ENCODE measurements at regions of chr5 and their contacts with region 1.

Region 1: GRCh38 chr5:80083101-80083890 is 48.1 kb downstream of the THBS4 start:
- DNase-seq: peak; percentile 29
- H3K4me3 Mint-ChIP-seq: peak overlapping the region; percentile 61
- H3K27ac Mint-ChIP-seq: peak overlapping the region; percentile 76
- H3K4me1 Mint-ChIP-seq: peaks cover 13% of the 10 kb centered on the region
- H3K27me3 Mint-ChIP-seq: peaks cover 3% of the 10 kb centered on the region

Region 2: DNA sequence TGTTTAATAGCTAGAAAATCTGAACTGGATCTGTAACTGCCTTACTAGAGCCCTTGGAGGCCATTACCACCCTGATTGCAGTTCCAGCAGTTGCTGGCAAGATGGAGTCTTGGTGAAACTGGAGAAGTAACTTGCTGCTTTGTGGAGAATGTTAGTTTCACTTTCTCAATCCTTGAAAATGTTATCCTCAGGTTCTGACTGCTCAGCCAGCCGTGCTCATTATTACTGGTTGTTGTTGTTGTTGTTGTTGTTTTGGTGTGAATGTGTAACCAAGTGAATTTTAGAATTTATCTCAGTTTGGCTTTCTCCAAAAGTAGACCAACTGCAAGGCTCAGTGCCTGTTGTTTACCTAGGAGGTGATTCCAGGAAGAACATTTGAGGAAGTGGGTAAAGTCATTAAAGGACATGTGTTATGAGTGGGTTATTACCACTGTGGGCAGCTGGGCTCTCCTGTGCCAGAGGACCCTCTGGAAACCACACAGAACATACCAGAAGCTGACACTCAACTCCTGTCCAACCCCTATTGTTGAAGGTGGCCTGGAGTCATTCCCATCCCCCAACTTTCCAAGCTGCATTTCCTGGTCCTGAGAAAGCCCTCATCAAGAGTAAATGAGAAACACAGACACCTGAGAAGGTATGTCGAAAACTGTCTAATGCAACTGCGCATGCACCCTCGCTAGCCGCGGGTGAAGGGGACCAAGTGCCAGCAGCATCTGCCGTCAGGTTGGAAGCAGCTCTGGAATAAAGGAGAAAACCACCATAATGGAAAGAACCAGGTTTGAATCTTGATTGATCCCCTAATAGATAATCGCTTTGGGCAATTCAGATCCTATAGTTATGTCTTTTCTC is 282.1 kb before region 1 on chr5:
- CTCF ChIA-PET with region 1: no interaction called
- DNase-seq: peak; percentile 27
- H3K4me3 Mint-ChIP-seq: no peak overlapping the region
- H3K27ac Mint-ChIP-seq: peak overlapping the region; percentile 64
- H3K4me1 Mint-ChIP-seq: peaks cover 24% of the 10 kb centered on the region
- H3K27me3 Mint-ChIP-seq: peaks cover 7% of the 10 kb centered on the region

Region 3: DNA sequence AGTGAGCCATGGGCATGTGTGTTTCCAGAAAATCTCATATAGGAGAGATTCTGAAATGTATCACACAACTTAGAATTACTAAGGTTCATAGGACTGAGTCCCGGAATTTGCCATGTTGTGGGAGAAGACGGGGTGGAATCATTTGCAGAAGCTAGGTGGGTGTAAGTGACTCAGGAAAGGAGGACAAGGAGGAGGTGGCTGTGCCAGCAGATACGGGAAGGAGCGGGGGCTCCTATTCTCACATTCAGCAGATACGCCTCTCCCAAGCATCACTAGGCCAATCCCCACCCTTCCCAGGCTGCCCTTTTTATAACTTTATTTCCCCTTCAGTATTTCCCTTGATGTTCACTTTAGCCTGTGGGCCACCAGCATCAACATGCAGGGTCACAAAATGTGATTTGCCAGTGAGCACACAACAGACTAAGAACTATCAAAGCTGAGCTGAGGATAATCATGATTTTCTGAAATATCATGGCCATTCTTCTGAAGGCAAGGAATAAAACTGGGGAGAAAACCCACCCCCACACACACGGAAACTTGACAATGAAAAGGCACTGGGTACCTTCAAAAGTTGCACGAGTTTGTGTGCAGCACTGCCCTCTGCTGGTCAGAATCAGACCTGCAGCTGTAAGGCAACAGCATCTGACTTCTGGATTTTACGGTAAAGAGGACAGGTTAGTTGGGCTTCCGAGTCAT is 225.4 kb before region 1 on chr5:
- CTCF ChIA-PET with region 1: interaction called, 12 read pairs
- DNase-seq: peak; percentile 87
- H3K4me3 Mint-ChIP-seq: no peak overlapping the region
- H3K27ac Mint-ChIP-seq: no peak overlapping the region
- H3K4me1 Mint-ChIP-seq: no peaks in the 10 kb centered on the region
- H3K27me3 Mint-ChIP-seq: peaks cover 25% of the 10 kb centered on the region

Region 4: DNA sequence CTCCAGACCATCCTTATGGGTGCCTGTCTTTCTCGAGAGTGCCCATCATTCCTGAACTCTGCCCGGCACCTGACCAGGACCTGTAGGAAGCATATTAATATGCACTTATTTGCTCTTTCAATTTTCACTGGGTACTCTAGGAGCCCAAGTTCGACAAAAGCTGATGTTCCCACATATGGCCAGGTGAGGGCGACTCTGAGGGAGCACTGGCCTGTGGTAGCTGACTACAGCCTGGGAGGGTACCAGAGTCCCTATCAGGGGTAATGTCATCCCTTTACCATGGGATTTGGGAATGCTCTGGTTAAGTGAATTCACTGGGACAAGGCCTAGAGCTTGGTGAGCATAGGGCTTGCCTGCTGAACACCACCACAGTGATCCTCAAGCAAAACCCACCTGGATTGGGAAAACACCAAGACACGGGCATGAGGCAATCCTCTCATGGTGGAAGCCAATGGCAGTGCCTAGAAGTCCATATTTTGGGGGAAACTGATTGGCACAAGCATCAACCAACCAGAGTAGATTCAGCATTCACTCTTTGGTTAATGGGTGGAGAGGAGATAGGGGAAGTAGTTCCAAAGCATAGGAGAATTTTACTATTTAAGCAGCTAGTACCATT is 204.5 kb before region 1 on chr5:
- CTCF ChIA-PET with region 1: interaction called, 60 read pairs
- DNase-seq: peak; percentile 53
- H3K4me3 Mint-ChIP-seq: no peak overlapping the region
- H3K27ac Mint-ChIP-seq: no peak overlapping the region
- H3K4me1 Mint-ChIP-seq: no peaks in the 10 kb centered on the region
- H3K27me3 Mint-ChIP-seq: peaks cover 17% of the 10 kb centered on the region

Region 5: DNA sequence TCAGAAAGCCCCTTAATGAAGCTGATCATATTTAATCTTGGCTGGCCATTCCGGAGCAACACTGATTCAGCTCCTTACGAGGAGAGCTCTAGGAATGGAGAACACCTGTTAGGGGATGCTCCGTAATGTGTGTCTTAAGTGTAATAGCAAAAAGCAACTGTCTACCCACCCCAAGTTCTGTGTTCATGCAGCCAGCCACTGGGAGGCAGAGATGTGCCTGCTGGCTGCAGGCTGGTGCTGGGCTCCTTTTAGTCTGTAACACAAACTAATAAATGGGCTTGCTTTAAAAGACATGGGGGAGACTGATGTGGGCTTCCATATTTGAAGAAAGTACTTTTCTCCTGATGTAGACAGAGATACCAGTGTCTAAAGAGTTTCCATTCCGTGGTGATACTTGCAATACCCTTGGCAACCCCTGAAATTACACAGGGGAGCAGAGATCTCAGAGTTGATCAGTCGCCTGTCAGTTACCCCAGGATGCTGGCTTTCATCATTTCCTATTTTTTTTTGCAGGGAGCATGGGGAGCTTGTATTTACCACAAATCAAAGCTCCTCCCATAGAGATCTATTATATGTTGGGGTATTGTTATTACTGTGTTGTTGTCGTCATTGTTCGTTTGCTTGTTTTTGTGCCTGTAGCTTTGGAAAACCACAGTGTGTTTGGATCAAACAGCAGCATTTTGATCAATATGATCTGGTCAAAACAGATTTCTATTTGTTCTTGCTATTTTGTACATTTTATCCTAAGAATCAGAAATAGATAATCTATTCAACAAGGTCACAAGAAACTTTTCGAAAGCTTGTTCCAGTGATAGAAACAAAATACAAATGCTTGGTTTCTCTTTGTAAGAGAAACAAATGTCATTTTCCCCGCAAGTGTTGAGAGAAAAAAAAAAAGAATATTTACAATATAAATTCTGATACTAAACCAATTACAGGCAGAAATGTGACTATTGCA is 158.1 kb before region 1 on chr5:
- CTCF ChIA-PET with region 1: interaction called, 23 read pairs
- DNase-seq: peak; percentile 29
- H3K4me3 Mint-ChIP-seq: no peak overlapping the region
- H3K27ac Mint-ChIP-seq: no peak overlapping the region
- H3K4me1 Mint-ChIP-seq: peaks cover 15% of the 10 kb centered on the region
- H3K27me3 Mint-ChIP-seq: peaks cover 21% of the 10 kb centered on the region

Region 6: DNA sequence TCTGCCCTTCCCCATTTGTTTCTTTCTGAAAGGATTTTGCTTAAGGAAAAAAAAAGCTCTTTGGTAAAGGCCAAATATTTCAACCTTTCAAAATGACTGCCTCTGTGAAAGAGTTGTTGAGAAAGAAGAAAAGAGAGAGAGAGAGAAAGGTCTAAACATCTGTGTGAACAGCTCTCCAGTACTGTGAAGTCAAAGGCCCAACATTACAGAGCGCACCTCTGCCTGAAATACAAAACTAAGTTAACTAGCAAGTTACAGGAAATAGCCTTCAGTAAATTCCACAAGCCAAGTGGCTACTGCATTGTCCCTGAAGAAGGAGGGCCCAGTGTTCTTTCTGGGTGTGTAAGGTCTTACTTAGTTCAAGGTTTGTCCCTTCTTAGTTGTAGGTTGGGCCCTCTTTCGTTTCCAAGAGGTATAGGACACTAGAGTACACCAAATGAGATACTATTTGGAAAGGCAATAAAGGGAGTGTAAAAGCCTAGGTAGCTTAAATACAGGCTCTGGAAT is 56.2 kb after region 1 on chr5:
- CTCF ChIA-PET with region 1: no interaction called
- DNase-seq: no peak
- H3K4me3 Mint-ChIP-seq: no peak overlapping the region
- H3K27ac Mint-ChIP-seq: peak overlapping the region; percentile 88
- H3K4me1 Mint-ChIP-seq: peaks cover 96% of the 10 kb centered on the region
- H3K27me3 Mint-ChIP-seq: no peaks in the 10 kb centered on the region

Measured in activated naive CD4-positive, alpha-beta T cell treated with anti-CD3 and anti-CD28 coated beads, Interleukin-2, amount 10 ng/mL, durations not matched to agents 7 days and 5 days (primary cell).